AG04450 (cell line): ENCODE measurements at regions of chr6 and their contacts with region 1.

Region 1: DNA sequence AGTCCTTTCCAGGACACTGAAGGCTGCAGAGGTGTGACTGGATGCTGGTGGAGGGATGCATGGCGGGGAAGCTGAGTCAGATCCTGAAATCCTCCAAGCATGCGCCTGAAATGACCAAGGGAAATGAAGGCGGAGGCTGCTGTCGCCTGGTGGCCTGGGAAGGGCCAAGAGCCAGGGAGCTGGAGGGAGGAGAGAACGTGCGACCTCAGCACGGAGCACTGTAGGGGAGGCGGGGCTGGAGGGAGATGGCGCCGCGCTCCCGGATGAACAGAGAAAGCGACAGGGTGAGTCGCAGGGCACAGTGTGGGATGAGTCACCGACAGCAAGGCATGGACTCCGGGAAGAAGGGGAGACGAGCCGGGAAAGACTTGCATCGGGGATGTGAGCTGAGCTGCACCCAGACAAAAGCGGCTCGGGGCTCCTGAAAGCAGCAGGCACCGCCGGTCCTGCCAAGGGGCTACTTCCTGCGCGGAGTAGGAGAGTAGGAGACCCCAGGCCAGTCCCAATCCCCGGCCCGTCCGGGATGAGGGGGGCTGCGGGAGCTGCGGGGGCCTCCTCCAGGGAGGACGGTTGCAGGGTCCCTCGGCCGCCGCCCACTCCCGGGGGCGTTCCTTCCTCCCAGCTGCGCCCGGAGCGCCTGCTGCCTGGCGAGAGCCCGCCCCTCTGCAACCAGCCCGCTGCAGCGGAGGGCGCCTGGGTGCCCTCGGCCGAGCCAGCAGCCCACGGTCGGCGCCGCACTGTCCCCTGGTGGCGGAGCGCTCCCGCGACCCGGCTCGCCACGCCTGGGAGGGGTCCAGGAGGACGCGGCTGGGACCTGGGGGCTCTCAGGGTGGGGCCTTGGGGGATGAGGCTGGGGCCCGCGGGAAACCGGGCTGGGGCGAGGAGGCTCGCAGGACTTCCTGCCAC is 11.0 kb upstream of the NQO2 start:
- DNase-seq: peak; percentile 54
- H3K4me3 ChIP-seq: peak overlapping the region; percentile 82
- H3K27ac ChIP-seq: peak overlapping the region; percentile 96
- H3K27me3 ChIP-seq: no peaks in the 10 kb centered on the region
- CTCF ChIP-seq: peak; percentile 63

Region 2: GRCh38 chr6:2791124-2791974 is 197.3 kb before region 1 on chr6:
- CTCF ChIA-PET with region 1: interaction called, 23 read pairs
- POLR2A ChIA-PET with region 1: interaction called, 5 read pairs
- DNase-seq: peak; percentile 84
- H3K4me3 ChIP-seq: peak overlapping the region; percentile 21
- H3K27ac ChIP-seq: peak overlapping the region; percentile 98
- H3K27me3 ChIP-seq: no peaks in the 10 kb centered on the region
- CTCF ChIP-seq: peak; percentile 88

Region 3: GRCh38 chr6:2848851-2849250 is 139.8 kb before region 1 on chr6:
- CTCF ChIA-PET with region 1: interaction called, 35 read pairs
- POLR2A ChIA-PET with region 1: interaction called, 3 read pairs
- DNase-seq: no peak
- H3K4me3 ChIP-seq: no peak overlapping the region
- H3K27ac ChIP-seq: no peak overlapping the region
- H3K27me3 ChIP-seq: no peaks in the 10 kb centered on the region
- CTCF ChIP-seq: no peak

Region 4: DNA sequence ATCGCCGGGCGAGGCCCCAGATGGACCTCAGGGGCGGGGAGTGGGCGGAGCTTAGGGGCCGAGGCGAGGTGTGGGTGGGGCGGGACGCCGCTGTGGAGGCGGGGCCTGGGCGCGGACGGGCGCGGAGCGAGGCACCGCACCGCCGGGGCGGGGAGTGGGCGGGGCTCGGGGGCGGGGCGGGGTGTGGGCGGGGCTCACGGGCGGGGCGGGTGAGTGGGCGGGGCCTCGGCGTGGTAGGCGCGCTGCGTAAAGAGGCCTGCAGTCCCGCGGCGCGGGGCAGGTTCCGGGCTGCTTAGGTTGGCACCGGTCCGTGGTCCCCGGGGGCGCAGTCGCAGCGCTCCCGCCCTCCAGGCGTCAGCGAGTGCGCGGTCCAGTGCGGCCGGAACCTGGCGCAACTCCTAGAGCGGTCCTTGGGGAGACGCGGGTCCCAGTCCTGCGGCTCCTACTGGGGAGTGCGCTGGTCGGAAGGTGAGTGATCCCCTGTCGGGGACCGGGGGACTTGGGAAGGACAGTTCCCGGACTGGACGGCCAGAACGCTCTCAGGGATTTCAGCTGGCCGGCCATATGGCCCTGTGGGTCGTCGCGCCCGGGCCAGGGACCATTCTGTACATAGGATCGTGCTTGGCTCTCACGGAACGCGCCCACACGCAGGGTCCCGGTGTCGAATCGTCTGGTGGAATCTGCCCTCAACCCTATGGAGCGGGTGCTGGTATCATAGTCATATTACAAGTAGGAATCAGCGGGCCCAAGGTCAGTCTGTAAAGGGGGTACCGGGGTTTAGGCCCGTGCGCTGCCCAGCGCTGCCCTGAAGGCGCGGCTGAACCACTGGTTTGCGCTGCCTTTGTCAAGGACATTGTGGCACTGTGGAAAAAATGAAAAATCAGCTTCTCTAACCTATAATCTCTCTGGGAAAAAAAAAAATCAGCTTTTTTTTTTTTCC is 11.2 kb after region 1 on chr6 and contains the start of gene NQO2:
- CTCF ChIA-PET with region 1: interaction called, 24 read pairs
- POLR2A ChIA-PET with region 1: interaction called, 10 read pairs
- DNase-seq: peak; percentile 34
- H3K4me3 ChIP-seq: peak within 1 kb of the TSS; percentile 87
- H3K27ac ChIP-seq: peak within 1 kb of the TSS; percentile 47
- H3K27me3 ChIP-seq: no peaks in the 10 kb centered on the region
- CTCF ChIP-seq: no peak
- polyA plus RNA-seq, gene NQO2: 32.4 and 34.3 TPM in 2 replicates

Region 5: GRCh38 chr6:3068329-3069214 is 79.9 kb after region 1 on chr6 and contains the start of gene RIPK1:
- CTCF ChIA-PET with region 1: no interaction called
- POLR2A ChIA-PET with region 1: interaction called, 13 read pairs
- DNase-seq: peak; percentile 58
- H3K4me3 ChIP-seq: peak within 1 kb of the TSS; percentile 82
- H3K27ac ChIP-seq: peak within 1 kb of the TSS; percentile 96
- H3K27me3 ChIP-seq: no peaks in the 10 kb centered on the region
- CTCF ChIP-seq: peak; percentile 46
- polyA plus RNA-seq, gene RIPK1: 25.5 and 25.9 TPM in 2 replicates